Dorsolateral prefrontal cortex (tissue), 120 donors: ENCODE measurements at regions of chrX and their contacts with region 1.

Region 1: DNA sequence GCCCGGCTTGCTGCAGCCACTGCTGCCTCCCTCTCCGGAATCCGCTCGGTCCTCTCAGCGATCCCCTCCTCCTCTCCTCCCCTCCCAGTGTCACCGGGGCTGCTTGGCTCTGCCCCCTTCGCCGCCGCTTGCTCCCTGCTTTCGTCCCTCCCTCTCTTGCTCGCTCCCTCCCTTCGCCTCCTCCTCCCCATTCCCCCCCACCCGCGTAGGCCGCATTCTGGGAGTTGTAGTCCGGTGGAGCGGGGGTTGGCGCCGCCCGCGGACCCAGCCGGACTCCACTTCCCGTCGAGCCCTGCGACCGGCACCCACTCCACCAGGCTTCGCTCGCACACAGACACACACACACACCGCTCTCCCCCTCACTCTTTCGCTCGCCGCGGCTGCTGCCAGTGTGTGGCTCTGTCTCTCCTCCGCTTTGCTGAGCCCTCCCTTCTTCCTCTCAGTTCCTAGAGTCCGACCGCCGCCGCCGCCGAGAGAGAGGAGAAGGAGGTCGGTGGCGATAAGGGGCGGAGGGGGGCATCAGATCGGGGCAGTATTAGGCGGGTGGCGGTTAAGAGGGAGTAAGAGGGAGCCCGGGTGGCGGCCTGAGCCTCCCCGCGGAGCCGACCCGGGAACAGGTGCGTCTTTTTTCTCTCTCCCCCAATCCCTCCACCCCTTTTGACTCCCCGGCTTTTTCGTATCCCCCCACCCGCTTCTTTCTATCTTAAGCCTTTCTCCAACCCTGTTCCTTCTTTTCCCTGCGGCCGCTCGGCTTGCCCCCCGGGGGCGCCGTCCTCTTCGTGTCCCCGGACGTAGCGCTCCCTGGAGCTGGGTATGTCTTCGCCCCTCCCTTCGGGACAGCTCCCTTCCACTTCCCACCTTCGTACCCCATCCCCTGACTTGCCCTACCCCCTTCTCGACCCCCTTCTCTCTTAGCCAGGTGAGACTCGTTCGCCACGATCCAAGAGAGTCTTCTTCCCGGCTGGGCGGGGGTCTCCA is at the start of gene BCORL1:
- DNase-seq: peak; percentile 81 to 94 (median 90)
- H3K4me3 ChIP-seq: peak within 1 kb of the TSS in 7 of 59 donors; percentile 14 to 63 (median 51)
- H3K27ac ChIP-seq: peak within 1 kb of the TSS in 38 of 59 donors; percentile 6 to 79 (median 57)
- H3K27me3 ChIP-seq: peaks cover 0 to 28% (median 0%) of the 10 kb centered on the region in 45 donors
- CTCF ChIP-seq: peak in 13 of 56 donors; percentile 5 to 31 (median 14)
- total RNA-seq, gene BCORL1: 8.6 to 20.7 (median 13.9) TPM

Region 2: DNA sequence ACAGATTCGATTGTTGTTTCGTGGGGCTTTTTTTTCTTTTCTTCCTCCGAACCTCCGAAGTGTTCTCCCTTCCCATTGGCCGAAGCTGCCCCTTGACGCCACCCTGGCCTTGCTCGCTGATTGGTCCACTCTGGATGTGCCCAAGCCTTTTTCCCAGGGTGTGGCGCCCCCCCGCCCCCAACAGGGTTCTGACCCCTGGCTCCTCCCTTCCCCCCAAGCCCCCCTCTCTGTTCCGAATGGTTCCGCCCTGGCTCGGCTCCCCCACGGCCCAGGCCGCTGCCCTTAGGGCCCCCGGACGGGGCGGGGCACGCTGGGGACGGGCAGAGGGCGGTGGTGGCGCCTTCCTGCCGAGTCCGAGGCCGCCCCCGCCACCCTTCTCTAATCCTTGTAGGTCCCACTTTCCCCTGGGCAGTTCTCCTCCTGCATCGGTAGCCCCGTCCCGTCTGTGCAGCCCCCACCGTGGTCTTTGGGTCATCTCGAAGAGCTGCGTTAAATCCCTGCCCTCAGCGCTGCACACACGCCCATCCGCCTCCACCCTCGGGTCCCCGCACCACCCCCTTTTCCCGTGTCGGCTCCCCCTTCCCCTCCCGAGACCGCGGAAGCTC is 51.0 kb before region 1 on chrX:
- intact Hi-C with region 1: loop called (anchors 1 to 2 kb)
- DNase-seq: peak; percentile 85 to 92 (median 89)
- H3K4me3 ChIP-seq: peak overlapping the region; percentile 29 to 71 (median 56)
- H3K27ac ChIP-seq: peak overlapping the region in 58 of 59 donors; percentile 32 to 92 (median 86)
- H3K27me3 ChIP-seq: peaks cover 0 to 38% (median 0%) of the 10 kb centered on the region in 45 donors
- CTCF ChIP-seq: no peak

Region 3: GRCh38 chrX:130055103-130055502 is 72.5 kb after region 1 on chrX:
- intact Hi-C with region 1: loop called in 1 of 2 experiments (anchors 5 kb)
- DNase-seq: no peak
- H3K4me3 ChIP-seq: no peak overlapping the region
- H3K27ac ChIP-seq: no peak overlapping the region
- H3K27me3 ChIP-seq: peaks cover 0 to 53% (median 3%) of the 10 kb centered on the region in 45 donors
- CTCF ChIP-seq: no peak

Region 4: GRCh38 chrX:130170752-130171445 is 188.3 kb after region 1 on chrX:
- intact Hi-C with region 1: loop called in 1 of 2 experiments (anchors 2 kb)
- DNase-seq: peak; percentile 73 to 94 (median 89)
- H3K4me3 ChIP-seq: peak overlapping the region; percentile 34 to 78 (median 64)
- H3K27ac ChIP-seq: peak overlapping the region; percentile 18 to 98 (median 93)
- H3K27me3 ChIP-seq: peaks cover 0 to 53% (median 4%) of the 10 kb centered on the region in 45 donors
- CTCF ChIP-seq: peak in 3 of 56 donors; percentile 7 to 23 (median 13)

Region 5: GRCh38 chrX:130268500-130269170 is 286.1 kb after region 1 on chrX and contains the start of gene ZNF280C:
- intact Hi-C with region 1: no loop called
- DNase-seq: peak; percentile 72 to 87 (median 80)
- H3K4me3 ChIP-seq: peak within 1 kb of the TSS; percentile 19 to 78 (median 63)
- H3K27ac ChIP-seq: peak within 1 kb of the TSS in 43 of 59 donors; percentile 7 to 84 (median 60)
- H3K27me3 ChIP-seq: peaks cover 0 to 23% (median 0%) of the 10 kb centered on the region in 45 donors
- CTCF ChIP-seq: peak in 29 of 56 donors; percentile 9 to 43 (median 25)
- total RNA-seq, gene ZNF280C: 2.8 to 8.4 (median 5.6) TPM